Activated B cell treated with CpG ODN at 0.5 μM for 24 hours (primary cell): ENCODE measurements at regions of chr22 and their contacts with region 1.

Region 1: DNA sequence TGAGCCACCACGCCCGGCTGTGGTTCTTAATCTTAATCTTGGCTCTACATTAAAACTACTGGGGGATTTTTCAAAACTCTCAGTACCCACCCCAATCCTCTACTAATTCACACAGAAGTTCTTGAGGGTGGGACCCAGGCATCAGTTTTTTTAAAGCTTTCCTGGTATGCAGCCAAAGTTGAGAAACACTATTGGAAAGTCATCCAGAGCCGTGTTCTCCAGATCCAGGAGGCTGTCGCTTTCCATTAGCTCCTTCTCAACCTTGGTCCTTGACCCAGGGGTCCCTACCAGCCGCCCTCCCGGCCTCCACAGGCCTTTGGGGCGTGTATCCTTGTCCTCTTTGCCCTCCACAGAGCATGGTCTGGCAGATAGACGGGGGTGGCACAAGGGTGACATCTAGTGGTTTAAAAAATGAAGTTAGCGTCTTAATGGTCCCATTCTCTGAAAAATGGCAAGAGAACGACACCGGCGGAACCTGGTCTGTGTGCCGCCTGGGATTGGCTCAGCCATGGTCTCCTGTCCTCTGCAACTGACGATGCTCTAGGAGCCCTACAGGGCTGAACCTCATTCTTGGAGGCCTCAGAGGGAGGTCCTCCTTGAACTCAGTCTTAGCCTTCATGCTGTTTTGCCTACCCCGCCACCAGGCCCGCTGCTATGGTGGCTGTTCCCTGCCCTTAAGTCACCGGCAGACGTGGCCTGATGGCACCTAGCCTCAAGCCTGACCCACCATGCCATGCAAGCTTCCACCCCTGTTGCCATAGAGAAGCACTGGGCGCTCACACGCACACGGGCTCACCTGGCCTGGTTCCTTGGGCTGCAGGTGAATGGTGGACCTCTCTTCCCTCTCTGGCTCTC is 152.0 kb upstream of the SYN3 start:
- DNase-seq: peak; percentile 24
- ATAC-seq: peak; percentile 78
- H3K4me3 Mint-ChIP-seq: no peak overlapping the region
- H3K27ac Mint-ChIP-seq: no peak overlapping the region
- H3K4me1 Mint-ChIP-seq: peaks cover 14% of the 10 kb centered on the region
- H3K27me3 Mint-ChIP-seq: no peaks in the 10 kb centered on the region
- CTCF ChIP-seq: peak; percentile 74

Region 2: DNA sequence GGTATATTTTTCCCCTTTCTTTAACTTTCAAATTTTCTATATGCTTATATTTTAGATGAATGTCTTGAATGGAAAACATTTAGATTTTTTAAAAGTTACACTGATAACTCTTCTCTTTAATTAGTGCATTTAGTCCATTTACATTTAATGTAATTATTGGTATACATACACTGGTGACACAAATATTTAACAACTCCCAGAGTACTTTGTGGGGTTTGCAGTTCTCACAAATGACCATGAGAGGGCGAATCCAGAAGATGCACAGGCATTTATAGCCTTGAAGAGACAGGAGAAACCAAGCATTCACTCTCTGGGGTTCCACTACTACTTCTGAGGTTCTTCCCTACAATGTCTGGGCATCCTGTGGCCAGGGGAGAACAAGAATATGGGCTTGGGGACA is 283.6 kb before region 1 on chr22:
- CTCF ChIA-PET with region 1: interaction called, 3 read pairs
- POLR2A ChIA-PET with region 1: no interaction called
- intact Hi-C with region 1: loop called (anchors 2 kb)
- DNase-seq: no peak
- ATAC-seq: no peak
- H3K4me3 Mint-ChIP-seq: no peak overlapping the region
- H3K27ac Mint-ChIP-seq: no peak overlapping the region
- H3K4me1 Mint-ChIP-seq: no peaks in the 10 kb centered on the region
- H3K27me3 Mint-ChIP-seq: no peaks in the 10 kb centered on the region
- CTCF ChIP-seq: no peak